Stomach (tissue), 19 donors: ENCODE measurements at regions of chr1 and their contacts with region 1.

Region 1: DNA sequence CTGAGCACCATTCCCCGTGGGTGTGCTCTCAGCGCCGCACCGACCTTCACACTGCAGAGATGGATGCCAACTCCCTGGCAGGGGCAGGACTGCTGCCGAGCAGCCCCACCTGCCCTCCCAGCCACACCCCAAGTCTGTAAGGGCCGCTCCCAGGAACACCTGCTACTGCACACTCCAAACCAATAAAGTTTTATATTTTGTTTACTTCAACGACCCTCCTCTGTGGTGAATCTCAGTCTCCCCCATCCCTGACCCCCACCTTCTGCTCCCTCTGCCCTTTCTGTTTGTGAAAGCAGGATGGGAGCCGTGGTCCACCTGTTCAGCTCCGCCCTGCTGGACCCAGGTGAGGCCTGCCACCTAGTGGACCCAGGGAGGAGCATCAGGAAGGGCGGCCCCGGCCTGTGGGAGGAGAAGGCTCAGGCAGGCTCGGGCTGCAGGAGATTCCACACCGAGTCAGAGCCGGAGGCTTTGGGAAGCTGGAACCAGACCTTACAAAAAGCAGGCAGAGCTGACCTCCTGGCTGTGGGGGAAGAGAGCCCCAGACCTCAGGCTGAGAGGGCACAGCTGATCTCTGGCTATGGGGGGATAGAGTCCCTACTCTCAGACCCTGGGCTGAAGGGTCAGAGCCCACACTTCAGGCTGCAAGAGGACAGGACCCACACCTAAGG is 982 bp upstream of the TMEM82 start:
- DNase-seq: peak; percentile 92 to 93
- H3K4me3 ChIP-seq: no peak overlapping the region
- H3K27ac ChIP-seq: peak overlapping the region in 3 of 5 donors; percentile 14 to 29 (median 16)
- H3K4me1 ChIP-seq: peaks cover 17 to 40% (median 28%) of the 10 kb centered on the region in 4 donors
- H3K27me3 ChIP-seq: no peaks in the 10 kb centered on the region
- CTCF ChIP-seq: peak in 5 of 7 experiments; percentile 81 to 97 (median 91)
- EP300 ChIP-seq: no peak
- POLR2A ChIP-seq: no peak

Region 2: GRCh38 chr1:14915356-14916054 is 825.8 kb before region 1 on chr1:
- intact Hi-C with region 1: no loop called
- DNase-seq: peak; percentile 51 to 80
- H3K4me3 ChIP-seq: no peak overlapping the region
- H3K27ac ChIP-seq: no peak overlapping the region
- H3K4me1 ChIP-seq: peaks cover 0 to 7% (median 0%) of the 10 kb centered on the region in 4 donors
- H3K27me3 ChIP-seq: peaks cover 0 to 3% (median 0%) of the 10 kb centered on the region in 3 donors
- CTCF ChIP-seq: peak in 5 of 7 experiments; percentile 32 to 88 (median 88)
- EP300 ChIP-seq: no peak
- POLR2A ChIP-seq: no peak

Region 3: GRCh38 chr1:15501208-15502032 is 239.9 kb before region 1 on chr1:
- intact Hi-C with region 1: no loop called
- DNase-seq: peak; percentile 79 to 84
- H3K4me3 ChIP-seq: no peak overlapping the region
- H3K27ac ChIP-seq: no peak overlapping the region
- H3K4me1 ChIP-seq: peaks cover 0 to 6% (median 0%) of the 10 kb centered on the region in 4 donors
- H3K27me3 ChIP-seq: no peaks in the 10 kb centered on the region
- CTCF ChIP-seq: peak in 5 of 7 experiments; percentile 53 to 65 (median 58)
- EP300 ChIP-seq: no peak
- POLR2A ChIP-seq: no peak

Region 4: GRCh38 chr1:15598436-15598835 is 142.9 kb before region 1 on chr1:
- intact Hi-C with region 1: loop called (anchors 5 kb)
- DNase-seq: no peak
- H3K4me3 ChIP-seq: no peak overlapping the region
- H3K27ac ChIP-seq: no peak overlapping the region
- H3K4me1 ChIP-seq: peaks cover 7 to 27% (median 15%) of the 10 kb centered on the region in 4 donors
- H3K27me3 ChIP-seq: no peaks in the 10 kb centered on the region
- CTCF ChIP-seq: no peak
- EP300 ChIP-seq: no peak
- POLR2A ChIP-seq: no peak